Activated CD4-positive, alpha-beta memory T cell treated with anti-CD3 and anti-CD28 coated beads for 36 hours (primary cell): ENCODE measurements at regions of chr6 and their contacts with region 1.

Region 1: DNA sequence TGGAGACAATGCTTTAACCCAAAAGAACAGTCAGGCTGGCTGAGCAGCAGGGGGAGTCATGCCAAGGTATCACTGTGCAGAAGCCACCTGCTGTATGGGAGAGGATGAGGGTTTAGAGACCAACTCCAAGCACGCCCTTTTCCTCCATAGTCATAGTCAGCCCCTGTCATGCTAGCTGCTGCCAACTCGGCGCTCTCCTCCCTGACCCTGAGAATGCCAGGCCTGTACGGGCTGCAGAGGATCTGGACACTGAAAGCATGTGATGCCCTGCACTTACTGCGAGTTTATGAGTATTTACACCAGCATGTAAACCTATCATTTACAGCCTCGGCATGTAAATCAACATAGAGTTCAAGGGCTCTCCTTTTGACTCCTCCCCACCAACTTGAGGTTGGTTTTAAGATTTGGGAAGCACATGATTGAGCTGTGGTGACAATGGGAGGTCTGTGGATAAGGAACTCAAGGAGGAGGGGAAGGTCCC is 11.7 kb upstream of the SCUBE3 start:
- DNase-seq: no peak
- H3K4me3 Mint-ChIP-seq: no peak overlapping the region
- H3K27ac Mint-ChIP-seq: no peak overlapping the region
- H3K4me1 Mint-ChIP-seq: no peaks in the 10 kb centered on the region
- H3K27me3 Mint-ChIP-seq: peaks cover 25% of the 10 kb centered on the region

Region 2: DNA sequence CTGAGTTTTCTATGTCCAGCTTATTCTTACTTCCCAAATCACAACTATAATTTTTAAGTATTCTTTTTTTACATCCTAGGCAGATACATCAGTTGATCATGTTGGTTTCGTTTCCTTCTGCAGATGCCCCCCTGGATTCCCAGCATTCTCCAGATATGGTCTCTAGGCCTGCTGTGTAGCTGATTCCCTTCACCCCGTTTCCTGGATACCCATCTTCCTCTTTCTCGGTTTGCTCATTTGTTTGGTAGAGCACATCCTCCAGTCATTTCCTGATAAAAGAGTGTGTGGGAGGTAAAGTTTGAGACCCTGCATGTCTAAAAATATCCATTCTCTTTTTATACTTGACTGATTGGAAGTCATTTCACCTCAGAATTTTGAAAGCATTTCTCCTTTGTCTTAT is 246.7 kb before region 1 on chr6:
- CTCF ChIA-PET with region 1: no interaction called
- POLR2A ChIA-PET with region 1: no interaction called
- intact Hi-C with region 1: no loop called
- DNase-seq: no peak
- H3K4me3 Mint-ChIP-seq: no peak overlapping the region
- H3K27ac Mint-ChIP-seq: no peak overlapping the region
- H3K4me1 Mint-ChIP-seq: peaks cover 11% of the 10 kb centered on the region
- H3K27me3 Mint-ChIP-seq: no peaks in the 10 kb centered on the region

Region 3: GRCh38 chr6:35139908-35140655 is 62.0 kb before region 1 on chr6:
- CTCF ChIA-PET with region 1: interaction called, 82 read pairs
- POLR2A ChIA-PET with region 1: no interaction called
- intact Hi-C with region 1: no loop called
- DNase-seq: peak; percentile 62
- H3K4me3 Mint-ChIP-seq: no peak overlapping the region
- H3K27ac Mint-ChIP-seq: no peak overlapping the region
- H3K4me1 Mint-ChIP-seq: peaks cover 15% of the 10 kb centered on the region
- H3K27me3 Mint-ChIP-seq: peaks cover 17% of the 10 kb centered on the region

Region 4: DNA sequence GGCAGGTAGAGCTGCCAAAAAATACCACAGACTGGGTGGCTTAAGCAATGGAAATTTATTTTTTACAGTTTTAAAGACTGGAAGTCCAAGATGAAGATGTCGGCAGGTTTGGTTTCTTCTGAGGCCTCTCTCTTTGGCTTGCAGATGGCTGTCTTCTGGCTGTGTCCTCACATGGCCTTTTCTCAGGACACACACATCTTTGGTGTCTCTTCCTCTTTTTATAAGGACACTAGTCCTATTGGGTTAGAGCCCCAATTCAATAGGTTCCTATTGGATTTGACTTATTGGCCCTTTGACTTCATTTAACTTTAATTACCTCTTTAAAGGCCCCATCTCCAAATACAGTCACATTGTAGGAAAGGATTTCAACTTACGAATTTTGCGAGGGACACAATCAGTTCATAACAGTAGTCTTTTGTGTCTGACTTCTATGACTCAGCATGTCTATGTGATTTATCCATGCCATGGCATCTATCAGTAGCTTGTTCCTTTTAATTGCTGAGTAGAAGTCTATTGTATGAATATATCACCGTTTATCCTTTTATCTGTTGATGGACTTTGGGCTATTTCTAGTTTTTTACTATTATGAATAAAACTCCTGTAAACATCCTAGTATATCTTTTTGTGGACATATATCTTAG is 49.9 kb before region 1 on chr6:
- CTCF ChIA-PET with region 1: interaction called, 82 read pairs
- POLR2A ChIA-PET with region 1: no interaction called
- intact Hi-C with region 1: loop called (anchors 1 kb)
- DNase-seq: no peak
- H3K4me3 Mint-ChIP-seq: no peak overlapping the region
- H3K27ac Mint-ChIP-seq: no peak overlapping the region
- H3K4me1 Mint-ChIP-seq: peaks cover 26% of the 10 kb centered on the region
- H3K27me3 Mint-ChIP-seq: peaks cover 3% of the 10 kb centered on the region

Region 5: DNA sequence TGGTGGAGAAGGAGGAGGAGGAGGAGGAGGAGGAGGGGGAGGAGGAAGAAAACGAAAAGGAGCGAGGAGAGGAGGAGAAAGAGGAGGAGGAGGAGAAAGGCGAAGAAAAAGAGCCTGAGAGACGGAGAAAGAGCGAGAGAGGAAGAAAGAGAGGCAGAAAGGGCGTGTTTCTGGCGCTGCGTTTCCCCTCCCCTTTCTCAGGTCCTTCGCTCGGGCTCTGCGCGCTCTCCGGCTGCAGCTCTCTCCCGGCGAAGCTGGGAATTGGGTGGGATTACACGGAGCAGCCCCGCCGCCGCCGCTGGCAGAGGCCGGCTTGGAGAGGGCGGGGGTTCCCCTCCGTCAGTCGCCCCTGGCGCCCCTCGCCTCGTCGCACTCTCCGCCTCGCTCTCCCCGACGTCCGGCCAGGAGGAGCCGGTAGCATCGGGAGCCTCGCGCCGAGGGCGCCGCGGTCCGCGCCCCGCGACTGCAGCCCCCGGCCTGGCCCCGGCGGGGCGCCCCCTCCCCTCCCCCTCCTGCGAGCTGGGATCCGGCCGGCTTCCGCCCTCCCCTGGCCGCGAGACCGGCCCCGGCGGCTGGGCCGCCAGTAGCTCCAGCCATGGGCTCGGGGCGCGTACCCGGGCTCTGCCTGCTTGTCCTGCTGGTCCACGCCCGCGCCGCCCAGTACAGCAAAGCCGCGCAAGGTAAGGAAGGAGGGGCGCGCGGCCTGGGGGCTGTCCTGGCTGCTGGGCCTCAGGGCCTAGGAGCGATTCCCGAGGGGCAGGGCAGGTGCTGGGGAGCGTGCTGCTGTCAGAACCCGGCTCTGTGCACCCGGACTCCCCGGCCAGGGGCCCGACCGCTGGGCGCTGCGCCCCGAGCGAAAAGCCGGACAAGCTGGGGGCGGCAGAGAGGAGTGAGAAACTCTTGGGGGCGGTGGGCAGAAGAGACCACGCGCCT is 12.0 kb after region 1 on chr6 and contains the start of gene SCUBE3:
- CTCF ChIA-PET with region 1: interaction called, 20 read pairs
- POLR2A ChIA-PET with region 1: interaction called, 3 read pairs
- intact Hi-C with region 1: no loop called
- DNase-seq: peak; percentile 16
- H3K4me3 Mint-ChIP-seq: peak within 1 kb of the TSS; percentile 21
- H3K27ac Mint-ChIP-seq: no peak within 1 kb of the TSS
- H3K4me1 Mint-ChIP-seq: peaks cover 5% of the 10 kb centered on the region
- H3K27me3 Mint-ChIP-seq: peaks cover 62% of the 10 kb centered on the region
- total RNA-seq, gene SCUBE3: 0.02 TPM in 1 of 2 experiments, not detected in the other